ENCODE measurements at regions of chr11 and their contacts with region 1.

Region 1: GRCh38 chr11:122197055-122197987 is 81.3 kb upstream of the BLID start:
- DNase-seq: no peak
- H3K4me3 ChIP-seq: no peak overlapping the region
- H3K27ac ChIP-seq: peak overlapping the region; percentile 13
- H3K4me1 ChIP-seq: peaks cover 20% of the 10 kb centered on the region
- H3K27me3 ChIP-seq: no peaks in the 10 kb centered on the region
- CTCF ChIP-seq: no peak
- POLR2A ChIP-seq: no peak

Region 2: DNA sequence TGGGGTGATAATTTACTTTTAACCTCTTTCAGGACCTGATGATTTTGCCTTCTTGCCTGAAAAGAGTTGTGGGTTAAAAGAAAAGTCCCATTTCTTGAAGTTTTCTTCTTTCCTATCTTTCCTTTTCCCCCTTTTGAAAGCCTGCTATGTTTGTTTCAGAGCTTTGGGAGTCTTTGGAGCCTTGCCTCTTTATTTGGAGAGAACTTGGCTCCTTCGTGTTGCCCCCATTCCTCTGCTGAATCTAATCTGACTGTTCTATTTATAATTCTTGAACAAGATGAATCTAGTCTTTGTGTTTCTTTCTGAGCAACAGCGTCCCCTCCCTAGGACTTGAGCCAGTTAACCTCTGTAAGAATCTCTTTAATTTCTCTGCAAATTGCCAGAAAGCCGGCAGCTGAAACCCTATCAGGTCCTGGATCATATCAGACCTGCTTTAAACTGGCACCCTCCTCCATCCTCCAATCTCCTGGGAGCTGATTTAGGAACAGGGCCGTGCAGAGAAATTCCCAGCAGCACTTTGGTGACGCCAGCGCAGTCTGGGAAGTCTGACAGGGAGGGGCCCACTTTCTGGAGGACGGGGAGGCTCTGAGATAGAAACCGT is 455.5 kb before region 1 on chr11:
- intact Hi-C with region 1: loop called (anchors 5 kb)
- DNase-seq: no peak
- H3K4me3 ChIP-seq: peak overlapping the region in 1 of 2 donors; percentile 11
- H3K27ac ChIP-seq: peak overlapping the region; percentile 81
- H3K4me1 ChIP-seq: peaks cover 7% of the 10 kb centered on the region
- H3K27me3 ChIP-seq: no peaks in the 10 kb centered on the region
- CTCF ChIP-seq: no peak
- POLR2A ChIP-seq: no peak

Region 3: DNA sequence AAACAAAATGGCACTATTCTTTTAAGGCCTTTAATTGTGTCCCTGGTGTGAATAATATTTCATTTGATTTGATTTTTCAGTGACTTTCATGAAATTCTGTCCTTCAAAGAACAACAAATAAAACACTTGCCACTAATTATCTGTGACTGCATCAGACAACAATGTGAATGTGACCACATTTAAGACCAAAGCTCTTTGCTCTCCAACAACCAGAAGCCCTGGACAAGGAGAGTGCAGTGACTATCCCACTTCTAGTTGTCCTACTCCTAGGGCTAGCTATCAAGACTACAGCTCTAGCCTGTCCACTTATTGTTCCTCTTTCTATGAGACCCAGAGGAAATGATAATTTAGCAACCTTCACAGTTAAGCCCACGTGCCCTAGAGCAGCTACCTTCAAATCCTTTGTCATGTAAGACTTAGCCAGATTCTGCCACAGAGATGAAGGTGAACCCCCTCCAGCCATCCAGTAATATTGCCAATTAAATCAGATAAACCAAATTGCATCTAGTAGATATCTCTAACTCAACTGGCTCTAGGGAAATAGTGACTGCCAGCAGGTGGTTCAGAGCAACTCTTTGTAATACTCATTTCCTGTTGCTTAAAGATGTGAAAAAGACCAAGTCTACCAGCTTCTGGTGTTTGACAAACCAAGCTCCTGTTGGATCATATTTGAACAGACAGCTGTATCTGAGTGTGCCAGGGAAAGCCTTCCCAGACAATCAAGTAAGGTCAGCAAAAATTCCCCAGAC is 61.3 kb after region 1 on chr11:
- intact Hi-C with region 1: no loop called
- DNase-seq: no peak
- H3K4me3 ChIP-seq: no peak overlapping the region
- H3K27ac ChIP-seq: no peak overlapping the region
- H3K4me1 ChIP-seq: peaks cover 6% of the 10 kb centered on the region
- H3K27me3 ChIP-seq: no peaks in the 10 kb centered on the region
- CTCF ChIP-seq: no peak
- POLR2A ChIP-seq: no peak

Region 4: GRCh38 chr11:122330279-122330965 is 133.1 kb after region 1 on chr11:
- intact Hi-C with region 1: no loop called
- DNase-seq: no peak
- H3K4me3 ChIP-seq: no peak overlapping the region
- H3K27ac ChIP-seq: no peak overlapping the region
- H3K4me1 ChIP-seq: no peaks in the 10 kb centered on the region
- H3K27me3 ChIP-seq: no peaks in the 10 kb centered on the region
- CTCF ChIP-seq: no peak
- POLR2A ChIP-seq: no peak